Astrocyte of the cerebellum (primary cell): ENCODE measurements at regions of chr2 and their contacts with region 1.

Region 1: GRCh38 chr2:85459771-85460170 is 41.3 kb downstream of the SH2D6 start:
- DNase-seq: no peak
- H3K4me3 ChIP-seq: no peak overlapping the region
- CTCF ChIP-seq: no peak

Region 2: DNA sequence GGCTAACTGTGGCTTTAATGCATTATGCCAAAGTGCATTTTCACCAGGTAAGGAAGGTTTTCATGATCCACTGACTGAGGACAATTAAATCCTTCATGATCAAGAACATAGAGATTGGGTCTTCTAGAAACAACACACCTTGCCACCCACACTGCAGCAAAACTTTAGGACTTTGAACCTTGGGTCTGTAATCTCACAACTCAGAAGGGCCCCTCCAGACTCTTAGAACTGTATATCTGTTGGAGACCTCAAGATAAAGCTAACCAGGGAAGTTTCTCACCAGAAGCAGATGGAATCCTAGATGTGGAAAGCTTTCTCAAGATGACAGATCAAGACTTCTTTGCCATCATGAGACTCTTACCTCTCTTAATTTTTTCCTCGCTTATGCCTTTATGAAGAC is 36.7 kb after region 1 on chr2:
- in situ Hi-C with region 1: loop called (anchors 5 kb)
- DNase-seq: no peak
- H3K4me3 ChIP-seq: no peak overlapping the region
- CTCF ChIP-seq: no peak

Region 3: GRCh38 chr2:85524336-85524933 is 64.7 kb after region 1 on chr2:
- in situ Hi-C with region 1: no loop called
- DNase-seq: no peak
- H3K4me3 ChIP-seq: no peak overlapping the region
- CTCF ChIP-seq: no peak